ENCODE measurements at regions of chr10 and their contacts with region 1.

Region 1: GRCh38 chr10:71359364-71360046 is 37.2 kb upstream of the CDH23 start:
- DNase-seq: no peak
- H3K4me3 ChIP-seq: no peak overlapping the region
- H3K27ac ChIP-seq: no peak overlapping the region
- H3K4me1 ChIP-seq: peaks cover 17% of the 10 kb centered on the region
- H3K27me3 ChIP-seq: no peaks in the 10 kb centered on the region
- CTCF ChIP-seq: no peak

Region 2: DNA sequence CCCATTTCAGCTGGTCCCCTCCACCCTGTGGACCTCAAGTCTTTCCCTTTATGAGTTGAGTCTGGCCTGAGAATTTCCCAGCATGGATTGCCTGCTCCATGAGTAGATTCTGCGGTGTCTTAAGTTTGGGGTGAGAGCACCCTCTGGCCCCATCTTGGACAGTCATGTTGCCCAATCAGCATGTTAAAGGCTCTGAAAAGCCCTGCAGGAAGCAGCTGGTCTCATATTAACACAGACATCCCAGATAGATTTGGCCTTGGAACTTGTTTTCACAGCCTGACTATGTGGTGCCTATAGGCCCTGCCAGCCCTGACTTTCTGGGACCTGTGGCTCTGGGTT is 56.0 kb before region 1 on chr10:
- CTCF ChIA-PET with region 1: interaction called, 10 read pairs
- POLR2A ChIA-PET with region 1: no interaction called
- intact Hi-C with region 1: no loop called
- DNase-seq: no peak
- H3K4me3 ChIP-seq: no peak overlapping the region
- H3K27ac ChIP-seq: no peak overlapping the region
- H3K4me1 ChIP-seq: peaks cover 17% of the 10 kb centered on the region
- H3K27me3 ChIP-seq: no peaks in the 10 kb centered on the region
- CTCF ChIP-seq: peak; percentile 16; the same call in 1 of the 2 replicates

Region 3: DNA sequence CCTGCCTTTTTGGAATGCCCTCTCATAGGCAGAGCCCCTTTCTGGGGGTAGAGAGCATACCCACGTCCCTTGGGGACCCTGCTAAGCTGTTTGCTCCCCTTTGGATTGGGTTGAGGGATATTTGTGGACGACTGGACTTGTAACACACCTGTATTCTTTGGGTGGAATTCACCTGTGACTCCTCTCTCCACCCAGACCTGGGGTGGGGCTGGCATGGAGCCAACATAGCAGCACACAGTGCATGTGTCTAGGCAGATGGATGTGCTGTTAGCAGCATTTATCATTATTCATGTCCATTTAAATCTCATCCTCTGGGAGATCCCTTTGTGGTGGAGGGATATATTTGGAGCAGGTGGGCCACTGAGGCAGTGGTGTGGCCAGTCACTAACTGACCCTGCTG is 88.2 kb after region 1 on chr10:
- CTCF ChIA-PET with region 1: no interaction called
- POLR2A ChIA-PET with region 1: interaction called, 13 read pairs
- intact Hi-C with region 1: no loop called
- DNase-seq: peak in 1 of 2 experiments; percentile 37
- H3K4me3 ChIP-seq: no peak overlapping the region
- H3K27ac ChIP-seq: no peak overlapping the region
- H3K4me1 ChIP-seq: no peaks in the 10 kb centered on the region
- H3K27me3 ChIP-seq: no peaks in the 10 kb centered on the region
- CTCF ChIP-seq: no peak

Region 4: GRCh38 chr10:71462062-71462935 is 102.8 kb after region 1 on chr10:
- CTCF ChIA-PET with region 1: no interaction called
- POLR2A ChIA-PET with region 1: no interaction called
- intact Hi-C with region 1: no loop called
- DNase-seq: no peak
- H3K4me3 ChIP-seq: no peak overlapping the region
- H3K27ac ChIP-seq: no peak overlapping the region
- H3K4me1 ChIP-seq: no peaks in the 10 kb centered on the region
- H3K27me3 ChIP-seq: no peaks in the 10 kb centered on the region
- CTCF ChIP-seq: no peak

Region 5: GRCh38 chr10:71659111-71659634 is 299.7 kb after region 1 on chr10:
- CTCF ChIA-PET with region 1: interaction called, 22 read pairs
- POLR2A ChIA-PET with region 1: no interaction called
- intact Hi-C with region 1: no loop called
- DNase-seq: no peak
- H3K4me3 ChIP-seq: no peak overlapping the region
- H3K27ac ChIP-seq: no peak overlapping the region
- H3K4me1 ChIP-seq: no peaks in the 10 kb centered on the region
- H3K27me3 ChIP-seq: no peaks in the 10 kb centered on the region
- CTCF ChIP-seq: no peak

Measured in PC-9 (cell line).